CD8-positive, alpha-beta memory T cell (primary cell): ENCODE measurements at regions of chr1 and their contacts with region 1.

Region 1: DNA sequence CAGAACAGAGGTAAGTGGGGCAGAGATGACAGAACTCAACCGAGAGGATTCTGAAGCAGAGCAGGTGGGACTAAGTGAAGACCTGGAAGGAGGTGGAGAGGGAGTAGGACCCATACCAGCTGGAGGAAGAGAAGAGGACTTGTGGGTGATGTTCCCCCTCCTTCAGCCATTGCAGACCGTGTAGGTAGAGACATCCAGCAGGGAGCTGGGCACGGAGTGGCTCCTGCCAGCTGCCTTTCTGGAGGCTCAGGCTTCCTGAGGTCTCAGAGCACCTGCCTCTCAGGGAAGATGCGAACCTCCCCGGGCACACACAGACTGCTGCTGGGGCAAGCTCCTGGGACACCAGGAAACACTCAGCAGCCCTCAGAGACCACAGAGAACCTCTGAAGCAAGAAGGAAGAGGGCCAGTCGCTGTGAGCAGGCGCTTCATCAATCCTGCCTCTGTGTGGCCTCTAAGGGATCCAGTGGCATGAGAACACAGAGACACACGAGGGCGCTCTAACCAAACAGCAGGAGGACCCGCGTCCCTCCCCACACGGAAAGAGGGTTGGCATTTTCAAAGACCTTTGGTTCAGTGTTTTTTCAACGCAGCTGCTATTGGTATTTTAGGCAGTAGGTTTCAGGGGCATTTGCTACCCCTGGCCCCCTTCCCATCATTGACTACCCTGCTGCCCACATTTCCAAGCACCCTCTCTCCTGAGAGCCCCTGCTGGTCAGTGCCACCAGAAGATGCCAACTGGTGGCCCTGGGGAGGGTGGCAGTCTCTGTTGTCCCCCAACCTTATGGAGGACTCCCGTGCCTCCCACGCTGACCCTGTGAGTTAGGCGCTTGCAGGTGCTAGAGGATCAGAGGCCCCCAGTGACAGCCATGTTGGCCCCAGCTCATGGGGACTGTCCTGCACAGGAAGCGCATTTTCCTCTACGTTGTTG is 89.6 kb upstream of the EDN2 start:
- DNase-seq: peak; percentile 60 to 83 (median 67)
- H3K4me3 ChIP-seq: no peak overlapping the region
- H3K4me3 Mint-ChIP-seq: no peak overlapping the region
- H3K27ac ChIP-seq: no peak overlapping the region
- H3K27ac Mint-ChIP-seq: peak overlapping the region in 2 of 8 donors; percentile 33 to 65
- H3K4me1 ChIP-seq: peaks cover 5% of the 10 kb centered on the region
- H3K4me1 Mint-ChIP-seq: peaks cover 4 to 14% (median 12%) of the 10 kb centered on the region in 3 donors
- H3K27me3 ChIP-seq: no peaks in the 10 kb centered on the region
- H3K27me3 Mint-ChIP-seq: no peaks in the 10 kb centered on the region

Region 2: GRCh38 chr1:41589395-41589794 is 15.3 kb after region 1 on chr1:
- CTCF ChIA-PET with region 1: no interaction called
- POLR2A ChIA-PET with region 1: no interaction called
- DNase-seq: no peak
- H3K4me3 ChIP-seq: no peak overlapping the region
- H3K4me3 Mint-ChIP-seq: no peak overlapping the region
- H3K27ac ChIP-seq: no peak overlapping the region
- H3K27ac Mint-ChIP-seq: peak overlapping the region in 1 of 8 donors; percentile 83
- H3K4me1 ChIP-seq: no peaks in the 10 kb centered on the region
- H3K4me1 Mint-ChIP-seq: no peaks in the 10 kb centered on the region
- H3K27me3 ChIP-seq: no peaks in the 10 kb centered on the region
- H3K27me3 Mint-ChIP-seq: no peaks in the 10 kb centered on the region

Region 3: DNA sequence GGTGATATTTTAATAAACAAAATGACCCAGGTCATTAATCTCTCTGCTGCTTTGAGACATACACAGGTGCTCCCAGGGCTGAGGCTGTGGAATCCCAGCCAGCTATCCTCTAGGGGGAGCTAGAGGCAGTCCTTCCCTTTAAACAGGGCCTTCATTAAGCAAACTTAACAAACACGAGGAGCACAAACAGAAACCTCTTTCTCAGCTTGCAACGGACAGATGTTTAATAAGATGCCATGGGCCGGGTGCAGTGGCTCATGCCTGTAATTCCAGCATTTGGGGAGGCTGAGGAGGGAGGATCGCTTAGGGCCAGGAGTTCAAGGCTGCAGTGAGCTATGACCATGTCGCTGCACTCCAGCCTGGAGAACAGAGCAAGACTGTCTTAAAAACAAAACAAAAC is 238.0 kb after region 1 on chr1:
- CTCF ChIA-PET with region 1: interaction called, 10 read pairs
- POLR2A ChIA-PET with region 1: no interaction called
- DNase-seq: peak in 4 of 5 donors; percentile 14 to 60 (median 27)
- H3K4me3 ChIP-seq: no peak overlapping the region
- H3K4me3 Mint-ChIP-seq: peak overlapping the region in 2 of 7 donors; percentile 31 to 84
- H3K27ac ChIP-seq: no peak overlapping the region
- H3K27ac Mint-ChIP-seq: peak overlapping the region in 4 of 8 donors; percentile 49 to 76 (median 62)
- H3K4me1 ChIP-seq: peaks cover 28% of the 10 kb centered on the region
- H3K4me1 Mint-ChIP-seq: peaks cover 34 to 45% (median 42%) of the 10 kb centered on the region in 3 donors
- H3K27me3 ChIP-seq: no peaks in the 10 kb centered on the region
- H3K27me3 Mint-ChIP-seq: no peaks in the 10 kb centered on the region

Region 4: DNA sequence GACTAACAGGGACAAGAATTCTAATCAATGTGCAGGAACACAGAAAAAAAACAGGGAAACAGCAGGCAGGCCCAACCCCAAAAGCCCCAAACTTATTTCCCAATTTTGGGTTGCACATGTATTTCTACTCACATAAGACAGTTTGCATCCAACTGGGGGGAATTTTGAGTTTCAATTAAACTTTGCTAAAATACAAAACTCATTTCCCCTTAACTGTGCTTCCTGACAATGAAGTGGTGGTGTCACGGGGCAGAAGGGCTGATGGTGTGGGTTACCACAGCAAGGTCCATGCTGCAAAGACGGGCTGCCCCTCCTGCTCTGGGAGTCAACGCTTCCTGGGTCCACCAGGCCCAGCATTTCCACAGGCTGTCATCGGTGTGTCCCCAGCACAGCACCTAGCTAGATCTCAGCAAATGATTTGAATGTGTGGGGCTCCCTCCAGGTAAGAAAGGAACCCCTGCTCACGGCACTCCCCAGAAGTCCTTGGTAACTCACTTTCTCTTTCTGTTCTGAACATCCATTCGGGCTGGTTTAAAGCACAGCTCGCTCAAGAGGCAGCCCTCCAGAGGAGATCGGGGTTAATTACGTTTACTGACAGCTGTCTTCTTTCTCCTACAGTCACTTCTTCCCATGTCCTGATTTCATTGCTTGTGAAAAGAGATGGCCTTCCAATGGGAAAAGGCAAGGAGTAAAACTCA is 317.3 kb after region 1 on chr1:
- CTCF ChIA-PET with region 1: interaction called, 11 read pairs
- POLR2A ChIA-PET with region 1: no interaction called
- DNase-seq: peak; percentile 20 to 77 (median 68)
- H3K4me3 ChIP-seq: peak overlapping the region; percentile 40
- H3K4me3 Mint-ChIP-seq: peak overlapping the region; percentile 81 to 94 (median 84)
- H3K27ac ChIP-seq: peak overlapping the region; percentile 62
- H3K27ac Mint-ChIP-seq: peak overlapping the region; percentile 86 to 99 (median 96)
- H3K4me1 ChIP-seq: peaks cover 53% of the 10 kb centered on the region
- H3K4me1 Mint-ChIP-seq: peaks cover 46 to 79% (median 58%) of the 10 kb centered on the region in 3 donors
- H3K27me3 ChIP-seq: no peaks in the 10 kb centered on the region
- H3K27me3 Mint-ChIP-seq: no peaks in the 10 kb centered on the region

Region 5: DNA sequence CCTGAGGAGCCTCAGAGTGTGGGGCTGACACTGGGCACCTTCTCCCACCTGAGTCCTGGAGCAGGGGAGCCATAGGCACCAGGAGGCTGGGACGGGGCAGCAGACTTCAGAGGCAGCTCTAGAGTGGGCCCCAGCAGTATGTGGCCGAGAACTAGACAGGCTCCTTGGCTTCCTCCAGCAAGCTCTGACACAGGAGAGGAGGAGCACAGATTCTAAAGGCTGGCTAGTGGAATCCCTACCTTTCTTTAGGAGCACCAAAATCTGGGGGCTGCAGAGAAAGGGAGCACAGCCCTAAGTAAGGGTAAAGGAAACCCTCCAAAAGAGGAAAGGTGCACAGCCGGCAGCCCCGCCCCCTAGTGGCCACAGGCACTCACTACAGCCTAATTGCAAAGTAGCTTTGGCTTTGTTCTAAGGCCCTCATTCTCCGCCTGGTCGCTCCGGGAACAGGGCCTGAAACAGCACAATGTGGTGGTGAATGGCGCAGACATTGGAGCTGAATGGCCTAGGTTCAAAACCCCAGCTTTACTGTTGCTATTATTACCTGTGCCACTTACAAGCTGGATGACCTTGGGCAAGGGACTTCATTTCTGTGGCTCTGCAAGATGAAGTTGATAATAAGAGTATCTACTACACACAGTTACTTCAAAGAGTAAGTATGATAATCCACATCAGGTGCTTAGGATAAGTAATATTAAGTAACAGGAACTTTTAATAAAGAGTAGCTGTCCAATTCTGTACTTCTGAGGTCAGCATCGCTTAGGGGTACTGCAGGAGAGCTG is 599.3 kb after region 1 on chr1:
- CTCF ChIA-PET with region 1: interaction called, 17 read pairs
- POLR2A ChIA-PET with region 1: no interaction called
- DNase-seq: peak; percentile 46 to 75 (median 51)
- H3K4me3 ChIP-seq: no peak overlapping the region
- H3K4me3 Mint-ChIP-seq: no peak overlapping the region
- H3K27ac ChIP-seq: no peak overlapping the region
- H3K27ac Mint-ChIP-seq: peak overlapping the region in 2 of 8 donors; percentile 51 to 72
- H3K4me1 ChIP-seq: no peaks in the 10 kb centered on the region
- H3K4me1 Mint-ChIP-seq: peaks cover 0 to 2% (median 0%) of the 10 kb centered on the region in 3 donors
- H3K27me3 ChIP-seq: no peaks in the 10 kb centered on the region
- H3K27me3 Mint-ChIP-seq: peaks cover 3 to 4% of the 10 kb centered on the region in 2 donors